ENCODE measurements at regions of chr7 and their contacts with region 1.

Region 1: DNA sequence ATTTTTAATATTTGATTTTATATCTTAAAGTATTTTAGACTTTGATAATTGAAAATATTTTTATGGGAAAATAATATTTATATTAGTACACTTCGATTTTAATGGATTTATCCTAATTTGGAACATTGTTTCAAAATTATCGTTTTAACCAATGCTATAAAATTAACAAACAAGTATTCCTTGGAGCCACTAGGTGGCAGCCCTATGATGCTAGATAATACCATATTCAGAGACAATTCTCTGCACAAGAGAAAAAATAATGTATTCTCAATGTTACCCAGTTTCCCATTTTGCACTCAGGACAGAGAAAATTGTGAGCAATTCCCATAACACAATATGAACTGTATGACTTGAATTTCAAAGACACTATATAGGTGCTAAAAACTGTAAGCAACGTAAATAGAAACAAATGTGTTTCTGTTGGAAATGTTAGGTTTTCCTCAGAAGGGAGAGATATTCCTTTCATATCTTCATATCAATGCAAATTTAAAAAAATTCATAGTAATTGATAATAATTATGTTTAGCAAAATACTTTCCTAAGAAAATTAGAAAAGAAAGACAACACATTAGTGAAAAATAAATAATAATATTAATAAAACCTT is 237.8 kb downstream of the SEMA3E start:
- DNase-seq: peak in 2 of 10 donors; percentile 4 to 23
- H3K4me3 ChIP-seq: no peak overlapping the region
- H3K27ac ChIP-seq: no peak overlapping the region
- H3K27me3 ChIP-seq: no peaks in the 10 kb centered on the region
- CTCF ChIP-seq: peak; percentile 53 to 93 (median 79)

Region 2: GRCh38 chr7:83325083-83325482 is 86.0 kb before region 1 on chr7:
- intact Hi-C with region 1: no loop called
- DNase-seq: no peak
- H3K4me3 ChIP-seq: no peak overlapping the region
- H3K27ac ChIP-seq: no peak overlapping the region
- H3K27me3 ChIP-seq: peaks cover 0 to 6% (median 0%) of the 10 kb centered on the region in 45 donors
- CTCF ChIP-seq: no peak

Region 3: DNA sequence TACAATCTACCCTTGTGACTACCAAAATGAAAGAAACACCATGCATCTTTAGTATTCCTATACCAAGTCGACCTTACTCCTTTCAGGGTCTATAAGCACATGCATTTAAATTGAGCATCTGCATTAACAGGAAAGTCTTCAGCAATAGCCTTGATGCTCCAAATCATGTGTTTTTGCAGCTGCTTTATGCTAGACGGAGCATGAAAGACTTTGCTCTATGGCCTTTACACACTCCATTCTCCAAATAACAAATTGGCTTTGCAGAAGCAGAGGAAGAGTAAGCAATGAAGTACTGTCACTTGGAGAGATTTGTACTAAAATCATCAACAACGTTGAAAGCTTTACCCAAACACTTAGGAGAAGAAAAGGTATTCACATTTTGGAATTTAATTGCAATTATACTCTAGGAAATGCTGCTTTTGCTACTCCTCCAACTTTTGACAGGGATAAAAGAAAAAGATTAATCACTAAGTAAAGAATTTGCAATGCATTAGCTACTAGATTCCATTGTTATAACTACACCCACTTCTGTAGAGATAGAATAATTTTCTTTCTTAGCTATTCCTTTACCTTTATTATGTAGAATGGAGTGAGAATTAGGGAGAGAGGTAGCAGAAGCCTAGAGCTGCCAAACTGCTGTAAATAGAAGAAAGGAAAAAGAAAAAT is 106.1 kb after region 1 on chr7:
- intact Hi-C with region 1: loop called in 1 of 2 experiments (anchors 10 kb)
- DNase-seq: no peak
- H3K4me3 ChIP-seq: no peak overlapping the region
- H3K27ac ChIP-seq: no peak overlapping the region
- H3K27me3 ChIP-seq: peaks cover 0 to 4% (median 0%) of the 10 kb centered on the region in 45 donors
- CTCF ChIP-seq: no peak

Region 4: DNA sequence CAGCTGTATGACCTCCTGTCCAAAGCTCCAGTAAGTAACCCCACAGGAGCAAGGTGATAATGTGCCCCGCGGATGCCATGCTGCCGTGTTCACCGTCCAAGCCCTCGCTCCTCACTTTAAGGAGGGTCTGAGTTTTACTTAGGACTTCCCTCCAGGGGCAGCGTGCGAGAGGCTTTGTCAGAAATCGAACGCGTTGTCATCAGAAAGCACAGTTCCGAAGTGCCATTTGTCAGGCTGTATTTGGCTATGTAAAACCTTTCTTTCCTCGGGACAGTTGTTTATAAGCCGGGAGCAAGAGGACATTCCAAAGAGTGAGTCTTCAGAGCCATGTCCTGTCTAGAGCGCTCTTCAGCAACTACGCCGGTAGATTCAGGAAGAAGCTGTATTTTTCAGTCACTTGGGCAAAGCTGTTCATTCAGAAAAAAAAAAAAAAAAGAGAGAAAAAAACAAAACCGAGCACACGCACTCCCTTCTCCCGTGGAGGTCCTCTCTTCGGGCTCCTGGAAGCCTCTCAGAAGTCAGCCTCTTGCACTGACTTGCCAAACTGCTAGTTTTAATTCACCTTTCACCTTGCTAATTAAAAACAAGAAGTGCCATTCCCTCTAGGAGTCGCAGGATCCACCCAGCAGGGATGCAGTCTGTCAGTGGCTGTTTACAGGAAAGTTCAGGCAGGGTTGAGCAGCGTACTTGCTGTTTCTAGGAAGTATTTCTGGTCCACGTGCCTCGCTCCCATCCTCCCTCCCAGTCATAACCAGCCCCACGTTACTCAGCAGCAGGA is 237.6 kb after region 1 on chr7 and contains the start of gene SEMA3E:
- intact Hi-C with region 1: loop called in 1 of 2 experiments (anchors 5 kb)
- DNase-seq: peak in 1 of 10 donors; percentile 7
- H3K4me3 ChIP-seq: peak within 1 kb of the TSS; percentile 20 to 73 (median 52)
- H3K27ac ChIP-seq: peak within 1 kb of the TSS in 1 of 59 donors; percentile 10
- H3K27me3 ChIP-seq: peaks cover 0 to 9% (median 0%) of the 10 kb centered on the region in 45 donors
- CTCF ChIP-seq: no peak
- total RNA-seq, gene SEMA3E: 0.98 to 29.5 (median 13.9) TPM

Region 5: GRCh38 chr7:83655951-83656556 is 245.0 kb after region 1 on chr7:
- intact Hi-C with region 1: loop called in 1 of 2 experiments (anchors 5 kb)
- DNase-seq: peak in 2 of 10 donors; percentile 48 to 60
- H3K4me3 ChIP-seq: no peak overlapping the region
- H3K27ac ChIP-seq: no peak overlapping the region
- H3K27me3 ChIP-seq: peaks cover 0 to 5% (median 0%) of the 10 kb centered on the region in 45 donors
- CTCF ChIP-seq: peak; percentile 53 to 88 (median 78)

Region 6: GRCh38 chr7:83819911-83820310 is 408.8 kb after region 1 on chr7:
- intact Hi-C with region 1: loop called in 1 of 2 experiments (anchors 10 kb)
- DNase-seq: no peak
- H3K4me3 ChIP-seq: no peak overlapping the region
- H3K27ac ChIP-seq: no peak overlapping the region
- H3K27me3 ChIP-seq: no peaks in the 10 kb centered on the region
- CTCF ChIP-seq: no peak

Measured in dorsolateral prefrontal cortex (tissue), 120 donors.